HCT116 (cell line): ENCODE measurements at regions of chrX and their contacts with region 1.

Region 1: GRCh38 chrX:131677655-131678628 is 134.1 kb downstream of the OR13H1 start:
- DNase-seq: peak; percentile 18
- ATAC-seq: peak; percentile 83
- H3K4me3 ChIP-seq: no peak overlapping the region
- H3K27ac ChIP-seq: no peak overlapping the region
- H3K4me1 ChIP-seq: no peaks in the 10 kb centered on the region
- H3K27me3 ChIP-seq: no peaks in the 10 kb centered on the region
- CTCF ChIP-seq: peak; percentile 47 to 70 (median 61); a peak in 5 of 6 replicates
- POLR2A ChIP-seq: no peak
- RAD21 ChIP-seq: peak; percentile 67

Region 2: GRCh38 chrX:130975947-130976346 is 702.0 kb before region 1 on chrX:
- CTCF ChIA-PET with region 1: interaction called, 5 read pairs
- POLR2A ChIA-PET with region 1: no interaction called
- RAD21 ChIA-PET with region 1: interaction called in 1 of 2 experiments, 3 read pairs
- intact Hi-C with region 1: loop called (anchors 1 kb)
- DNase-seq: peak; percentile 31
- ATAC-seq: peak; percentile 89
- H3K4me3 ChIP-seq: no peak overlapping the region
- H3K27ac ChIP-seq: no peak overlapping the region
- H3K4me1 ChIP-seq: no peaks in the 10 kb centered on the region
- H3K27me3 ChIP-seq: no peaks in the 10 kb centered on the region
- CTCF ChIP-seq: peak; percentile 40 to 65 (median 56); a peak in 5 of 6 replicates
- POLR2A ChIP-seq: no peak
- RAD21 ChIP-seq: peak; percentile 70

Region 3: GRCh38 chrX:130994671-130995070 is 683.3 kb before region 1 on chrX:
- CTCF ChIA-PET with region 1: interaction called, 11 read pairs
- POLR2A ChIA-PET with region 1: no interaction called
- RAD21 ChIA-PET with region 1: no interaction called
- intact Hi-C with region 1: no loop called
- DNase-seq: no peak
- ATAC-seq: peak; percentile 53
- H3K4me3 ChIP-seq: no peak overlapping the region
- H3K27ac ChIP-seq: no peak overlapping the region
- H3K4me1 ChIP-seq: no peaks in the 10 kb centered on the region
- H3K27me3 ChIP-seq: no peaks in the 10 kb centered on the region
- CTCF ChIP-seq: peak; percentile 37 to 57 (median 47); a peak in 4 of 6 replicates
- POLR2A ChIP-seq: no peak
- RAD21 ChIP-seq: peak; percentile 45

Region 4: GRCh38 chrX:131068945-131069719 is 608.8 kb before region 1 on chrX:
- CTCF ChIA-PET with region 1: interaction called, 8 read pairs
- POLR2A ChIA-PET with region 1: no interaction called
- RAD21 ChIA-PET with region 1: no interaction called
- intact Hi-C with region 1: loop called (anchors 10 kb)
- DNase-seq: peak; percentile 19
- ATAC-seq: peak; percentile 94
- H3K4me3 ChIP-seq: no peak overlapping the region
- H3K27ac ChIP-seq: no peak overlapping the region
- H3K4me1 ChIP-seq: no peaks in the 10 kb centered on the region
- H3K27me3 ChIP-seq: no peaks in the 10 kb centered on the region; the same call in 1 of the 2 replicates
- CTCF ChIP-seq: peak; percentile 35 to 58 (median 55); a peak in 5 of 6 replicates
- POLR2A ChIP-seq: no peak
- RAD21 ChIP-seq: peak; percentile 51

Region 5: GRCh38 chrX:131521824-131522223 is 156.1 kb before region 1 on chrX:
- CTCF ChIA-PET with region 1: no interaction called
- POLR2A ChIA-PET with region 1: no interaction called
- RAD21 ChIA-PET with region 1: no interaction called
- intact Hi-C with region 1: no loop called
- DNase-seq: no peak
- ATAC-seq: no peak
- H3K4me3 ChIP-seq: no peak overlapping the region
- H3K27ac ChIP-seq: no peak overlapping the region
- H3K4me1 ChIP-seq: no peaks in the 10 kb centered on the region
- H3K27me3 ChIP-seq: no peaks in the 10 kb centered on the region
- CTCF ChIP-seq: no peak
- POLR2A ChIP-seq: no peak
- RAD21 ChIP-seq: no peak